A673 (cell line): ENCODE measurements at regions of chr16 and their contacts with region 1.

Region 1: DNA sequence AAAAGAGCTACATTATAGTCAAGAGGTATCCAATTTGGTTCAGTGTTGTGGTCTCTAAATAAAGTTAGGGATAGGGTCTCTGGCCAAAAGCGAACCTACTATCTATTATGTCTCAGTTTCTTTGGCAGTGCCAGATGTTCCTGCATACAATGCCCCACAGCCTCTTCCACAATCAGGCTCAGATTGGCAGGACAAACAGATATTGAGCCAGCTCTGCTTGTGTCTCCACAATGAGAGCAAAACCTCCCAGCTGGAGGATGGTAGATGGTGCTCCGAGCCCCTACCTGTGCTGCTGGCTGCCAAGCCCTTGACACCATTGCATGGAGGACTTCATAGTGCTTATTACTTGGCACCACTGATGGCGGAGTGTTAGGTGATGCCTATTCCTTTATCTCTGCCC is 19.7 kb downstream of the PHAF1 start:
- DNase-seq: no peak
- H3K4me3 ChIP-seq: no peak overlapping the region
- H3K27ac ChIP-seq: no peak overlapping the region
- H3K4me1 ChIP-seq: no peaks in the 10 kb centered on the region
- H3K27me3 ChIP-seq: no peaks in the 10 kb centered on the region
- CTCF ChIP-seq: no peak

Region 2: DNA sequence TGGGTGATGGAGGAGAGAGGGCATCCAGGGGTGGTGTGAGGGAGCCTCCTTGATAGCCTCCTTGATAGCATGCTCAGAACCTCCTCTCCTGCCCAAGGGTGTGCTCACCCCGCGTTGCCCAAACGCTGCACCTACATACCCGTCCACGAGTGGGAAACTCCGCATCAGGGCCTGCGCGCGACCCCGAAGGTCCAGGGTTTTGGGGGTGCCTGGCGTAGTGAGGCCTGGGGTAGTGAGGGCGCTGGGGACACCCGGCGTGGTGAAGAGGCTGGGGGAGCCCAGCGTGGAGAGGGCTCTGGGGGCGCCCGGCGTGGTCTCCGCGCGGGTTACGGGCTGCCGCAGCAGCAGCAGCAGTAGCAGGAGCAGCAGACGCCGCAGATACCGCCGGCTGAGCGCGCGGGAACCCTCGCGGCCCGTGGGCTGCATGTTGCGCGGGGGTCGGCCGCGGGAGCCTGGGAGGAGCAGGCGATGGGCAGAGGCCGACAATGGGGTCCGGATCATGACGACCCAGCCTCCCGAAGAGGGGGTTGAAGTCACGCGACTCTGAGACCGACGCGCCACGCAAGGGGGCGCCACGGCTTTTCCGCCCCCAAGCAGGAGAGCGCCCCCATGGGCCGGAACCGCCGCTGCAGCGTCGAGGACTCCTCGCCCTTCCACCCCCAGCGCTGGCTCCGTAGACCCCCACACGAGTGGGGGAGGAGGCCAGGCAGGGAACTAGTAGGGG is 850.7 kb after region 1 on chr16 and contains the start of gene DPEP3:
- CTCF ChIA-PET with region 1: no interaction called
- POLR2A ChIA-PET with region 1: interaction called, 11 read pairs
- intact Hi-C with region 1: no loop called
- DNase-seq: no peak
- H3K4me3 ChIP-seq: no peak within 1 kb of the TSS
- H3K27ac ChIP-seq: no peak within 1 kb of the TSS
- H3K4me1 ChIP-seq: no peaks in the 10 kb centered on the region
- H3K27me3 ChIP-seq: no peaks in the 10 kb centered on the region
- CTCF ChIP-seq: peak; percentile 38; the same call in 1 of the 2 replicates
- total RNA-seq, gene DPEP3: not detected in 2 replicates